ENCODE measurements at regions of chr10 and their contacts with region 1.

Region 1: GRCh38 chr10:45594276-45595106 is 78.1 kb downstream of the ZFAND4 start:
- DNase-seq: peak; percentile 83 to 94 (median 88)
- ATAC-seq: peak; percentile 95
- H3K4me3 ChIP-seq: peak overlapping the region; percentile 85
- H3K4me3 Mint-ChIP-seq: peak overlapping the region; percentile 86 to 96 (median 93)
- H3K27ac ChIP-seq: peak overlapping the region; percentile 79
- H3K27ac Mint-ChIP-seq: peak overlapping the region; percentile 72 to 97 (median 93)
- H3K4me1 ChIP-seq: peaks cover 11 to 20% of the 10 kb centered on the region in 2 donors
- H3K4me1 Mint-ChIP-seq: peaks cover 27 to 51% (median 40%) of the 10 kb centered on the region in 7 donors
- H3K27me3 ChIP-seq: no peaks in the 10 kb centered on the region
- H3K27me3 Mint-ChIP-seq: peaks cover 4 to 7% (median 7%) of the 10 kb centered on the region in 5 donors

Region 2: DNA sequence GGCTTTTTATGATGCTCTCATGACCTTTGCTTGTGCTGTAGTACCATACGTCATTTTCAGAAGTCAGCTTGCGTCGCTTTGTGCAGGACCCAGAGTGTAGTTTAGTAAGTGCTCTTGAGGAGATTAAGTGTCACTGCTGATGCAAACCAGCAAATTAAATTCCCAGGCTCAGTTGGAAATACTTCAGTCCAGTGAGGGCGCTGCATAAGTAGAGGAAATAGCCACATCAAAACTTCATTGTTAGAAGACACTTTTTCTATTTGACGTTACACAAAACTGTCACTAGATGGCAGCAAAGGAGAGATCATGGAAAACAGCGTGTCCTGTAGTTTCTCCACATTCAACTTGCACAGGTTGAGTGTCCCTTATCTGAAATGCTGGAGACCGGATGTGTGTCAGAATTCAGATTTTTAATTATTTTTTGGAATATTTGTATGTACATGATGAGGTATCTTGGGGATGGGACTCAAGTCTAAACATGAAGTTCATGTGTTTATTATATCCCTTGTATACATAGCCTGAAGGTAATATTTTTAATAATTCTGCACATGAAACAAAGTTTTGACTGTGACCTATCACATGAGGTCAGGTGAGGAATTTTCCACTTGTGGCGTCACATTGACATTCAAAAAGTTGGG is 585.8 kb before region 1 on chr10:
- CTCF ChIA-PET with region 1: no interaction called
- POLR2A ChIA-PET with region 1: no interaction called
- intact Hi-C with region 1: loop called in 1 of 2 experiments (anchors 10 kb)
- DNase-seq: peak in 7 of 9 donors; percentile 33 to 68 (median 56)
- ATAC-seq: peak; percentile 91
- H3K4me3 ChIP-seq: no peak overlapping the region
- H3K4me3 Mint-ChIP-seq: no peak overlapping the region
- H3K27ac ChIP-seq: no peak overlapping the region
- H3K27ac Mint-ChIP-seq: no peak overlapping the region
- H3K4me1 ChIP-seq: no peaks in the 10 kb centered on the region
- H3K4me1 Mint-ChIP-seq: peaks cover 0 to 7% (median 3%) of the 10 kb centered on the region in 7 donors
- H3K27me3 ChIP-seq: no peaks in the 10 kb centered on the region
- H3K27me3 Mint-ChIP-seq: peaks cover 0 to 8% (median 0%) of the 10 kb centered on the region in 5 donors

Region 3: GRCh38 chr10:45470098-45471012 is 124.1 kb before region 1 on chr10:
- CTCF ChIA-PET with region 1: no interaction called
- POLR2A ChIA-PET with region 1: no interaction called
- intact Hi-C with region 1: loop called in 1 of 2 experiments (anchors 1 kb)
- DNase-seq: peak; percentile 17 to 84 (median 74)
- ATAC-seq: peak; percentile 91
- H3K4me3 ChIP-seq: no peak overlapping the region
- H3K4me3 Mint-ChIP-seq: peak overlapping the region; percentile 48 to 73 (median 62)
- H3K27ac ChIP-seq: peak overlapping the region; percentile 45
- H3K27ac Mint-ChIP-seq: peak overlapping the region; percentile 74 to 93 (median 88)
- H3K4me1 ChIP-seq: peaks cover 12 to 16% of the 10 kb centered on the region in 2 donors
- H3K4me1 Mint-ChIP-seq: peaks cover 18 to 57% (median 43%) of the 10 kb centered on the region in 7 donors
- H3K27me3 ChIP-seq: no peaks in the 10 kb centered on the region
- H3K27me3 Mint-ChIP-seq: no peaks in the 10 kb centered on the region

Region 4: DNA sequence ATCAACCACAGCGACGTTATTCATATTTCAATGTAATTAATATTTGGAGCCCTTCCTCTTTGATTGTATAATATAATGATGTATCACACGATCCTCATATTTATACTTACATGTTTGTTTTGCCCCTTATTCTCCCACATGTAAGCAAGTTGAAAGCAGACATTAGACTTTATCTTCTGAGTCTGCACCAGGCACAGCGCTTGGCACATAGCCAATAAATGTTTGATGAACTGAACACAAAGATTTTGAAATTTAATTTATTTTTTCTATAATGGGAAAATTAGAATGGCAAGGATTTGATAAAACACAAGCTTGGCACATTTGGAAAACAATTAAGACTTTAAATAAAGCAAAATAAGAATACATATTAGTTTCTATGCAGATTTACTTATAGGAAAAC is 46.5 kb after region 1 on chr10:
- CTCF ChIA-PET with region 1: no interaction called
- POLR2A ChIA-PET with region 1: no interaction called
- intact Hi-C with region 1: loop called in 1 of 2 experiments (anchors 2 kb)
- DNase-seq: no peak
- ATAC-seq: no peak
- H3K4me3 ChIP-seq: no peak overlapping the region
- H3K4me3 Mint-ChIP-seq: no peak overlapping the region
- H3K27ac ChIP-seq: no peak overlapping the region
- H3K27ac Mint-ChIP-seq: no peak overlapping the region
- H3K4me1 ChIP-seq: no peaks in the 10 kb centered on the region
- H3K4me1 Mint-ChIP-seq: no peaks in the 10 kb centered on the region
- H3K27me3 ChIP-seq: no peaks in the 10 kb centered on the region
- H3K27me3 Mint-ChIP-seq: no peaks in the 10 kb centered on the region

Region 5: DNA sequence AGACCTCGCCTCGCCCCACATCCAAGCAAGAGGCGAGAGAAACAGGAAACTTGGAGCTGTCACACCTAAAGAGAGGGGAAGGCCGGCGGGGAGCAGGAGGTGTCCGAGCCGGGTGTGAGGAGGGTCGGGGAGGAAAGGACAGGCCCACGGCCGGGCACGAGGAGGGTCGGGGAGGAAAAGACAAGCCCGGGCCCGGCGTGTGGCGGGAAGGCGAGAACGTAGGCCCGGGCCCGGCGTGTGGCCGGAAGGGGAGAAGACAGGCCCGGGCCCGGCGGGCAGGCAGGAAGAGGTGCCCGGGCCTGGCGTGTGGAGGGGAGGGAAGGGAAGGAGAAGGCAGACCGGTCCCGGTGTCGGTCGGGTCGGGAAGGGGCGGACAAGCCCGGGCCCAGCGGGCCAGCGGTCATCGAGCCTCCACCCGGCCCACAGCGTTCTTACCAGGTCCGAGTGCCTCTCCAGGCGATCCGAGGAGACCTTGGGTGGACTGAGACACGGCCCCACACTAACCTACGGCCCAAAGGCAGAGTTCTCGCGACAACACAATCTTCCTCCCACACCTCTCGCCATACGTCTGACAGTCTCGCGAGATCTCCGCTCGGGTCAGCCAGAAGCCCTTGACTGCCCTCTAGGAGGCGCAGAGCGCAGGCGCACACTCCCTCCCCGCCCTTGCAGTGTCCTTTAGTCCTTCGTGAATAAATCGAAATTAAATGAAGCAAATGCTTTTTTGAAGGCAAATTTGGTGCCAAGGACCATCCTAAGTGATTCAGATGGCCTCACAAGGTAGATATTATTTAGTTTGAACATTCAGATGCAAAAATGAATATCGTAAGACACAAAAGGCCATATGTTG is 435.8 kb after region 1 on chr10 and contains the start of gene NCOA4:
- CTCF ChIA-PET with region 1: no interaction called
- POLR2A ChIA-PET with region 1: no interaction called
- intact Hi-C with region 1: loop called (anchors 2 to 10 kb)
- DNase-seq: peak; percentile 88 to 96 (median 93)
- ATAC-seq: peak; percentile 98
- H3K4me3 ChIP-seq: peak within 1 kb of the TSS; percentile 70
- H3K4me3 Mint-ChIP-seq: peak within 1 kb of the TSS; percentile 89 to 100 (median 96)
- H3K27ac ChIP-seq: peak within 1 kb of the TSS; percentile 93
- H3K27ac Mint-ChIP-seq: peak within 1 kb of the TSS; percentile 89 to 99 (median 96)
- H3K4me1 ChIP-seq: peaks cover 27 to 42% of the 10 kb centered on the region in 2 donors
- H3K4me1 Mint-ChIP-seq: peaks cover 44 to 57% (median 55%) of the 10 kb centered on the region in 7 donors
- H3K27me3 ChIP-seq: no peaks in the 10 kb centered on the region
- H3K27me3 Mint-ChIP-seq: peaks cover 0 to 4% (median 0%) of the 10 kb centered on the region in 5 donors
- total RNA-seq, gene NCOA4: 54.6 to 126 (median 78.4) TPM